B cell (primary cell): ENCODE measurements at regions of chr17 and their contacts with region 1.

Region 1: GRCh38 chr17:56819431-56820145 is 14.1 kb downstream of the C17orf67 start:
- DNase-seq: peak; percentile 83
- ATAC-seq: peak; percentile 89
- H3K4me3 ChIP-seq: no peak overlapping the region
- H3K4me3 Mint-ChIP-seq: no peak overlapping the region
- H3K27ac ChIP-seq: no peak overlapping the region
- H3K27ac Mint-ChIP-seq: peak overlapping the region; percentile 50
- H3K4me1 ChIP-seq: peaks cover 3 to 6% of the 10 kb centered on the region in 2 donors
- H3K4me1 Mint-ChIP-seq: peaks cover 4% of the 10 kb centered on the region
- H3K27me3 ChIP-seq: no peaks in the 10 kb centered on the region
- H3K27me3 Mint-ChIP-seq: no peaks in the 10 kb centered on the region
- CTCF ChIP-seq: peak; percentile 87

Region 2: DNA sequence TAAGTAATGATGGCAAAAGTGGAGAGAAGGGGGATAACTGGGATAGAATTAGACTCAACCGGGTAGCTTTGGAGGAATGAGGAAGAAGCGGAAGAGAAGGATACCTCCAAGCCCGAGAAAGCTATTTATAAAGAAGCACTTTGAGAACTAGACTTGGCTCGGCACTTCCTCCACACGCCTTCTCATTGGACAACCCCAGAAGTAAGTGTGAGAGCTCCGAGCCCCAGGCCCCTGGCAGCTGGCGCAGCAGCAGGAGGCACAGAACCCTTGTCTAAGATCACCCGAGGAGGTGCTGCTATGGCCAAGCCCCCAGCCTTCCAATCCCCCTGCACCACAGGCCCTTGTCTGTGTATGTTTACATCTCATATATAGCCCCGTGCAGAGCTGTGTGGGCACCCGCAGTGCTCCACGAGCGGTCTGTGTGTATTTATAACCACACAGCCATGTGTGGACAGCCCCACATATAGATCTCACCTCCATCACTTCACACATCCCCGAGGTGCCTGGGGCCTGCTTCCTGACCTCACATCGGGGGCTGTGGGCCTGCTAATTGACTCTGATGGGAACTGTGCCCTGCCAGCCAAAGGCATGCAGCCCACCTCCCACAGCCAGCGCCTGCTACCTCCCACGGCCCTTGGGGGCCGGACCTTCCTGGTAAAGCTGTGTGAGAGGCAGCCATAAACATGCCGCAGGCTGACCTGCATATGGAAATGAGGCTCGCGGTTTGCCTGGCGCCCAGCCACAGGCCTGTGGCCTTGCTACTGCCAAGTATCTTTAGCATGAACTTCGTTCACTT is 82.0 kb before region 1 on chr17:
- CTCF ChIA-PET with region 1: no interaction called
- POLR2A ChIA-PET with region 1: no interaction called
- intact Hi-C with region 1: no loop called
- DNase-seq: no peak
- ATAC-seq: no peak
- H3K4me3 ChIP-seq: no peak overlapping the region
- H3K4me3 Mint-ChIP-seq: no peak overlapping the region
- H3K27ac ChIP-seq: no peak overlapping the region
- H3K27ac Mint-ChIP-seq: no peak overlapping the region
- H3K4me1 ChIP-seq: no peaks in the 10 kb centered on the region
- H3K4me1 Mint-ChIP-seq: no peaks in the 10 kb centered on the region
- H3K27me3 ChIP-seq: no peaks in the 10 kb centered on the region
- H3K27me3 Mint-ChIP-seq: peaks cover 16% of the 10 kb centered on the region
- CTCF ChIP-seq: no peak

Region 3: DNA sequence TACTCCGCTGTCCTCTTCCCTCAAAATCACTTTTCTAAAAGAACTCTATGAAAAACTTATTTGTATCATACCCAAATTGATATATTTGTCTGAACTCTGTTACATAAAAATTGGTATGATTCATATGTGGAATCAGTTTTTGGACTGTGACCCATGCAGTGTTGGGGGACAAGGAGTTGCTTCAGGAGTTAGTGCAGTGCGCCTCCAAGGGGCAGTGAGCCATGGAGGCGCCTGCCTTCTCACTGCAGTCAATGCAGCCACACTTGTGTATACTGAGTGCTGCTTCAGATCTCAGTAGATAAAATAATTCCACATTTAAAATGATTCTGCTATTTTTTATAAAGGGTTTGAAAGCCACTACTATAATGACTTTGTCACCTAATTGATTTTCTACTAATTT is 46.9 kb after region 1 on chr17:
- CTCF ChIA-PET with region 1: interaction called, 8 read pairs
- POLR2A ChIA-PET with region 1: no interaction called
- intact Hi-C with region 1: loop called (anchors 10 kb)
- DNase-seq: no peak
- ATAC-seq: no peak
- H3K4me3 ChIP-seq: no peak overlapping the region
- H3K4me3 Mint-ChIP-seq: no peak overlapping the region
- H3K27ac ChIP-seq: no peak overlapping the region
- H3K27ac Mint-ChIP-seq: no peak overlapping the region
- H3K4me1 ChIP-seq: peaks cover 4 to 7% of the 10 kb centered on the region in 2 donors
- H3K4me1 Mint-ChIP-seq: peaks cover 10% of the 10 kb centered on the region
- H3K27me3 ChIP-seq: no peaks in the 10 kb centered on the region
- H3K27me3 Mint-ChIP-seq: no peaks in the 10 kb centered on the region
- CTCF ChIP-seq: no peak

Region 4: GRCh38 chr17:56939901-56940343 is 120.3 kb after region 1 on chr17:
- CTCF ChIA-PET with region 1: interaction called, 151 read pairs
- POLR2A ChIA-PET with region 1: no interaction called
- intact Hi-C with region 1: loop called (anchors 1 kb)
- DNase-seq: peak; percentile 83
- ATAC-seq: peak; percentile 91
- H3K4me3 ChIP-seq: no peak overlapping the region
- H3K4me3 Mint-ChIP-seq: no peak overlapping the region
- H3K27ac ChIP-seq: no peak overlapping the region
- H3K27ac Mint-ChIP-seq: no peak overlapping the region
- H3K4me1 ChIP-seq: peaks cover 0 to 3% of the 10 kb centered on the region in 2 donors
- H3K4me1 Mint-ChIP-seq: peaks cover 4% of the 10 kb centered on the region
- H3K27me3 ChIP-seq: no peaks in the 10 kb centered on the region
- H3K27me3 Mint-ChIP-seq: no peaks in the 10 kb centered on the region
- CTCF ChIP-seq: peak; percentile 84

Region 5: DNA sequence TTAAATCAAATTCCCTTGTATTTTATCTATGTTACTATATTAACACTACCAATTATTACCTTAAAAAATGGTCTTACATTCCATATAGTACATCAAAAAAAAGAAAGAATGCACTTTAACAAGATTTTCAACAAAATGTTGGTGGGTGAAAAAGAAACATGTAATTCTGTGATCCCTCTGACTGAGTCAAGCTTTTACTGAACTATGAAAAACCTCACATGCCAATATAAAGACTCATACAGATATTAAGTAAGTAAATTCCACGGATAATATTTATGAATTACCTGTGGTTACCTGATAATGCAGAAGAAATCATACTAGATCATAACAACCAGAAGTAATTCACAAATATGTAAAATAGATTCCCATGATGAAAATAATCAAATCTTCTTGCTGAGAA is 128.9 kb after region 1 on chr17:
- CTCF ChIA-PET with region 1: interaction called, 151 read pairs
- POLR2A ChIA-PET with region 1: no interaction called
- intact Hi-C with region 1: no loop called
- DNase-seq: no peak
- ATAC-seq: no peak
- H3K4me3 ChIP-seq: no peak overlapping the region
- H3K4me3 Mint-ChIP-seq: no peak overlapping the region
- H3K27ac ChIP-seq: no peak overlapping the region
- H3K27ac Mint-ChIP-seq: no peak overlapping the region
- H3K4me1 ChIP-seq: no peaks in the 10 kb centered on the region
- H3K4me1 Mint-ChIP-seq: no peaks in the 10 kb centered on the region
- H3K27me3 ChIP-seq: no peaks in the 10 kb centered on the region
- H3K27me3 Mint-ChIP-seq: no peaks in the 10 kb centered on the region
- CTCF ChIP-seq: no peak